ENCODE measurements at regions of chr1 and their contacts with region 1.

Region 1: DNA sequence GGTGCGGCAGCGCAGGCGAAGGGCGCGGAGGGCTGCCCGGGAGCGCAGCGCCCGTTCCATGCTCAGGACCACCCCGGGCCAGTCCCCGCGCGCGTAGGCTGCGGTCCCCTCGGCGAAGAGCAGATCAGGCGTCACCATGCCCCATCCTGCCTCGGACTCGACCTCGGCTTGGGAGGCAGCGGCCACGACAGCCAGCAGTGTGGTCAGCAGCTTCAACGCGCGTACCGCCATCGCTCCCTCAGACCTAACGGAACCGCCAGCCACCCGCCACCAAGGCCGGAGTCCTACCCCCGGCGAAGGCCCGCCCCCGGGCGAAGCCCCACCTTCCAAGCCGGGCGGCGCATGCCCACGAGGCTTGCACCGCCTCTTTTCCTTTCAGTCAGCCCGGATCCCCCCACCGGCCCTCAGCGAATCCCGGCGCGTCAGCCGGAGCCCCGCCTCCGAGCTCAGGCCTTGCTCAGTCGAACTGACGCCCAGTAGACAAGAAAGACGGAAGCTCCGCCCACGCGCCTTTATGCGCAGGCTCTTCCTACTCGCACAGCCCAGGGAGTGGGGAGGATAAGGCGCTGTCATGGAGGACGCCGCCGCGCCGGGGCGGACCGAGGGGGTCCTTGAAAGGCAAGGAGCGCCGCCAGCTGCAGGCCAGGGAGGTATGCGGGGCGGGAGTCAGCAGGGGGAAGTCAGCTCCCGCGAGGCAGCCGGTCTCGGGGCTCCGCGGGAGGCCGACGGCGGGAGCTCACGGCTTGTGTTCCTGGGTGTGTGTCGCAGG is at the starts of genes C1orf50 and P3H1:
- DNase-seq: peak; percentile 98
- ATAC-seq: peak; percentile 94
- H3K4me3 ChIP-seq: peak within 1 kb of the TSS; percentile 95 to 99 (median 97)
- H3K27ac ChIP-seq: peak within 1 kb of the TSS; percentile 77
- H3K4me1 ChIP-seq: peaks cover 56% of the 10 kb centered on the region
- H3K27me3 ChIP-seq: peaks cover 0 to 4% of the 10 kb centered on the region in 2 experiments; a peak in 1 of 5 replicates
- CTCF ChIP-seq: peak; percentile 35; the same call in 1 of the 2 replicates
- EP300 ChIP-seq: no peak; a peak in 1 of 4 replicates
- POLR2A ChIP-seq: peak; percentile 86 to 95
- RAD21 ChIP-seq: peak; percentile 48
- total RNA-seq, gene C1orf50: 4.8 and 5.3 TPM in 2 replicates
- total RNA-seq, gene P3H1: 18.7 and 64.6 TPM in 2 replicates

Region 2: DNA sequence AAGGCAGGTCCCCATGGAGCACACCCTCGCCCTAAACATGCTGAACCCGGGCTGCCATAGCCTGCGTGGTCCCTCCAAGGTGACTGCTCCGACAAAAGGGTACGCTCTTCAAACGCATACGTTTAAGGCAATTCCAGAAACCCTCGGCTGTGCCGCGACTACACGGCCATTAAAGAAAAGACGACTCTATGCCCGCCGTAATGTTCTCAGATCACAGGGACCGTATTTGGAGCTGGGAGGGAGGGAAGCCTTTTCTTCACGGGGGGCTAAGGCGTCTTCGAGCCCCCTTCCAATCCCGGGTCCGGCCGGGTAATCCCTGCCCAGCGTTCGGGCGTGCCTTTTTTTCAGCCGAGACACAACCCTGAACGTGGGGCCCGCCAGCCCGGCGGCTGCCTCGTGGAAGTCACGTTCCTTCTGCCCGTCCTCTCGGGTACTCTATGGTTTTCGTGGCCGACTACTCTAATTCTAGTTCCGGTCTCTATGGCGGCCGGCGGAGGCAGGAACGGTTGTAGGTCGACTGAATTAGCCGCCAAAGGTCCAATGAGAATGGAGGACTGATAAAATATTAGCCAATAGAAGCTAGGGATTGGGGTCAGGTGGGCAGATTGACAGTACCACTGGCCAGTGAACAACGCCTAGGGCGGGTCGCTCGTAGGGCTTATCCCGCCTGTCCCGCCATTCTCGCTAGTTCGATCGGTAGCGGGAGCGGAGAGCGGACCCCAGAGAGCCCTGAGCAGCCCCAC is 85.0 kb before region 1 on chr1 and contains the start of gene YBX1:
- CTCF ChIA-PET with region 1: no interaction called
- POLR2A ChIA-PET with region 1: interaction called, 33 read pairs
- in situ Hi-C with region 1: no loop called
- intact Hi-C with region 1: no loop called
- DNase-seq: peak; percentile 98
- ATAC-seq: peak; percentile 95
- H3K4me3 ChIP-seq: peak within 1 kb of the TSS; percentile 76 to 87 (median 86)
- H3K27ac ChIP-seq: peak within 1 kb of the TSS; percentile 95
- H3K4me1 ChIP-seq: peaks cover 46% of the 10 kb centered on the region
- H3K27me3 ChIP-seq: no peaks in the 10 kb centered on the region; a peak in 1 of 5 replicates
- CTCF ChIP-seq: no peak
- EP300 ChIP-seq: no peak
- POLR2A ChIP-seq: peak; percentile 79 to 89
- RAD21 ChIP-seq: no peak
- total RNA-seq, gene YBX1: 500 and 628 TPM in 2 replicates

Region 3: DNA sequence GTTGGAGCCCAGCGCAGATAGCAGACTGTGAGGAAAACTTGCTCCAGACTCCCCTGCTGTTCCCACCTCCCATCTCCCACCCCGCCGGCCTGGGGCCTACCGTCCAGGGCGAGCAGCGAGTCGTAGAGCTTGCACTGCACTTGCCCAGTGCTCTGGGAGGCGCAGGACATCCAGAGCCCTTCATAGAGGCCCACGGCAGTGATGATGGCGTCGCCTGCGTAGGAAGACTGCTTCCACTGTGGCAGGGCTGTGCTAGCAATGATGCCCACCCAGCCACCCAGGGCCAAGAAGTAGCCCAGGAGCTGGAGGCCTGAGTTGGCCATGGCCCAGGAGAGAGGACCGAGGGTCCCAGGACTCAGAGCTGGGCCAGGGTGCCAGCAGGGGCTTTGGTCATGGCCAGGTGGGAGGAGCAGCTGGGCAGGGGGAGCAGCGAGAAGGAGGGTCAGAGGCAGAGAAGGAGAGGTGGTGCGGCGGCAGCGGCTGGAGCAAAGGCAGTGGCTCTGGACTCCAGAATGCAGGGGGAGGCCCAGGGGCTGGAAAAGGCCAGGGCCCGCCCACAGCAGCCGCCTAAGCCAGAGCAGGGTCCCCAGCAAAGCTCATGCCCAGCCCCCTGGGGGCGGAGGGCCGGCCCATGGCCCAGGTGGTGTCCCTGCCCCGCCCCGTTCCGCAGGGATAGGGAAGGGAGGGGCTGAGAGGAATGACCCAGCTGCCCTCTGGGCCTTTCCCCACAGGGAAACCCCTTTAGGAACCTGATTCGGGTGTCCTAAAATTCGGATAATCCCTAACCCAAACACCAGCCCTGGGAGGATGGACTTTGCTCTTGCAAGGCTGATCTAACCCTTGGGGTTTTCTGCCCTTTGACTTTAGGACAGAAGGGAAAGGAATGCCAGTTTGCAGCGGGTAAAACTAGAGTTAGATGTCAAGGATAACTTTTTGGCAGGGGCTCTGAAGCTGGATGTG is 26.9 kb before region 1 on chr1 and contains the start of gene CLDN19:
- CTCF ChIA-PET with region 1: no interaction called
- POLR2A ChIA-PET with region 1: interaction called, 28 read pairs
- in situ Hi-C with region 1: no loop called
- intact Hi-C with region 1: no loop called
- DNase-seq: peak; percentile 73
- ATAC-seq: peak; percentile 79
- H3K4me3 ChIP-seq: peak within 1 kb of the TSS; percentile 64 to 83 (median 76)
- H3K27ac ChIP-seq: no peak within 1 kb of the TSS
- H3K4me1 ChIP-seq: peaks cover 73% of the 10 kb centered on the region
- H3K27me3 ChIP-seq: no peaks in the 10 kb centered on the region
- CTCF ChIP-seq: no peak
- EP300 ChIP-seq: peak in 1 of 2 experiments; percentile 29; a peak in 1 of 4 replicates
- POLR2A ChIP-seq: peak in 1 of 2 experiments; percentile 60; a peak in 1 of 4 replicates
- RAD21 ChIP-seq: no peak
- total RNA-seq, gene CLDN19: 4.3 and 7.6 TPM in 2 replicates

Region 4: DNA sequence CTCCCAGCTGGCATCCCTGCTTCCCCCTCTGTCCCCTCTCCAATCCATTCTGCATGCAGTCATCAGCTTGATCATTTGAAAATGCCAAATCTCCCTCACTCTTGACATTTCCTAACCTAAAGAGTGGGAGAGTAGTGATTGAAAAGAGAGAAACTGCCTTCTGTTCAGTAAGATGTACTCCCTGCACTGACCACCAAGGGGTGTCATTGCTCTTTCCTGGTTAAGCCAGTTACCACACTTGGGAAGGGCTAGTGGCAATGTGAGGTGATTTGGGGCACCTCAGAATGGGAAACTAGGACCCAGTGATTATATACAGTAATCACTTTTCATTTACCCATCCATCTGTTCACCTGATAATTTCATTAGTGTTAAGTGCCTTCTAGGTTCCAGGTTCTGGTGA is 10.9 kb after region 1 on chr1:
- CTCF ChIA-PET with region 1: no interaction called
- POLR2A ChIA-PET with region 1: interaction called, 12 read pairs
- in situ Hi-C with region 1: no loop called
- intact Hi-C with region 1: no loop called
- DNase-seq: peak; percentile 40
- ATAC-seq: peak; percentile 82
- H3K4me3 ChIP-seq: no peak overlapping the region
- H3K27ac ChIP-seq: no peak overlapping the region
- H3K4me1 ChIP-seq: peaks cover 12% of the 10 kb centered on the region; the same call in 1 of the 2 replicates
- H3K27me3 ChIP-seq: no peaks in the 10 kb centered on the region
- CTCF ChIP-seq: peak; percentile 81
- EP300 ChIP-seq: no peak
- POLR2A ChIP-seq: no peak
- RAD21 ChIP-seq: peak; percentile 77

Region 5: DNA sequence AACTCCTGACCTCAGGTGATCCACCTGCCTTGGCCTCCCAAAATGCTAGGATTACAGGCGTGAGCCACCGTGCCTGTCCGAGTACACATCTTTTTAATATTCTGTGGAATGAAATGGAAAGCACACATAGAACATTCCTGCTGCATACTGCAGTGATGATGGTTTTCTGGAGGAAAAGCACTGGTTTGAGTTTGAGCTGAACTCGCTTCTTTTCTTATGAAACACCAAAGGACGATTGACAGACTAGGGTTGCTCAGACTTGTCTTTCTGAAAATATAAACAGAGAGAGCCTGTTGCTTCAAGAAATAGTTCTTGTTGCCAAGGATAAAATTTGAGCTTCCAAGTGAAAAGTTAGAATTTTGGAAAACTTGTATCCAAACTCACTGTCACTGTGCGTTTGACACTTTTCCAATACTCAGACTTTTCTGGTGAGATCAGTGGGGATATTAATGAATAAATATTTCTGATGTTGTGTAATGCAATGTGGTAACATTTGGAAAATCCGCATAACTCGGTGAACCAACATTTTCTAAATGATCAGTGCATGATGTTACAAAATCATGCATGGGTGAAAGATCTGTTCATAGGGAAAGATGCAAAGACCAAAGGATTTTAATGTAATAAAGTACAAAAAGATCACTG is 35.0 kb after region 1 on chr1:
- CTCF ChIA-PET with region 1: no interaction called
- POLR2A ChIA-PET with region 1: no interaction called
- in situ Hi-C with region 1: no loop called
- intact Hi-C with region 1: no loop called
- DNase-seq: no peak
- ATAC-seq: no peak
- H3K4me3 ChIP-seq: no peak overlapping the region
- H3K27ac ChIP-seq: no peak overlapping the region
- H3K4me1 ChIP-seq: no peaks in the 10 kb centered on the region
- H3K27me3 ChIP-seq: no peaks in the 10 kb centered on the region
- CTCF ChIP-seq: no peak
- EP300 ChIP-seq: no peak
- POLR2A ChIP-seq: no peak
- RAD21 ChIP-seq: no peak

Region 6: DNA sequence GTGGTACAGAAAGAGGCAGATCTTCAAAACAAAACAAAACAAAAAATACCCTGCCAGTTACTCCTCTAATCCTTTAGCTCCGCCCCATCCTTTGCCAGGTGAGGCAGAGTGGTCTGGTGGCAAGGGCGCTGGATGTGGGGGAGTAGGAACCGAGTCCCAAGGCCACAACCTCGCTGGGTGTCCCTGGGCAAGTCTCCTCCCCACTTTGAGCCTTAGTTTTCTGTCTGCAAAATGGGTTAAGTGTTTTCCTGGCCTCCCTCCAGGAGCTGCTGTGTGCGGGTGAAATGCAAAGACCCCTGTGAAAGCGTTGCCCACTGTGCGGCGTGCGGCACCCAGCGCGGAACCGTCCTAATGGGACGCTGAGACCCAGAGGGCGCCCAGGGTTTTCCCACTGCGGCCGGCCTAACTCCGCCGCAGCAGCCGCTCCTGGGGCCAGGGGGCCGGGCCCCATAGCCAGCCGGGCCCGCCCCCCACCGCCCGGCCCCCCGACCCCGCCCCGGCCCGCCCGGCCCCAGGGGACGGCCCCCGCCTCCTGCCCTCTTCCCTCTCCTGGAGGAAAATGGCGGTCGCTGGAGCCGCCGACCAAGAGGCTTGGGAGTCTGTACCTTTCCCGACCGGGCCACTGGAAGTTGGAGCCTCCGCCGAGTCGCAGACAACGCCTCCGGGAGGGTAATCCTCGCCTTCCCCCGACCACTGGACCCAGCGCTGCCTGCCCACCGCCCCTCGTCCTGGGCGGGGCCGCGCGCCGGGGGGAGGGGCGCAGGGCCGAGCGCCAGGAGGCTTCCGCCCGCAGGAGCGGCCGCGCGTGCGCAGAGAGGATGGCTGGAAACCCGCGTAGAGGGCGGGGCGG is 49.9 kb after region 1 on chr1 and contains the starts of genes ERMAP and SVBP:
- CTCF ChIA-PET with region 1: no interaction called
- POLR2A ChIA-PET with region 1: interaction called, 25 read pairs
- in situ Hi-C with region 1: no loop called
- intact Hi-C with region 1: loop called (anchors 5 kb)
- DNase-seq: peak; percentile 73
- ATAC-seq: peak; percentile 94
- H3K4me3 ChIP-seq: peak within 1 kb of the TSS; percentile 73 to 87 (median 84)
- H3K27ac ChIP-seq: peak within 1 kb of the TSS; percentile 100
- H3K4me1 ChIP-seq: peaks cover 34% of the 10 kb centered on the region
- H3K27me3 ChIP-seq: no peaks in the 10 kb centered on the region; a peak in 1 of 5 replicates
- CTCF ChIP-seq: peak; percentile 43
- EP300 ChIP-seq: no peak
- POLR2A ChIP-seq: peak; percentile 74 to 86
- RAD21 ChIP-seq: peak; percentile 38; the same call in 1 of the 2 replicates
- total RNA-seq, gene ERMAP: 2.6 and 4.4 TPM in 2 replicates
- total RNA-seq, gene SVBP: 45.2 and 48.2 TPM in 2 replicates

Region 7: GRCh38 chr1:42846257-42847110 is 79.6 kb after region 1 on chr1 and contains the start of gene ZNF691:
- CTCF ChIA-PET with region 1: no interaction called
- POLR2A ChIA-PET with region 1: interaction called, 29 read pairs
- in situ Hi-C with region 1: no loop called
- intact Hi-C with region 1: loop called (anchors 2 kb)
- DNase-seq: peak; percentile 97
- ATAC-seq: peak; percentile 98
- H3K4me3 ChIP-seq: peak within 1 kb of the TSS; percentile 85 to 97 (median 95)
- H3K27ac ChIP-seq: peak within 1 kb of the TSS; percentile 85
- H3K4me1 ChIP-seq: peaks cover 24% of the 10 kb centered on the region
- H3K27me3 ChIP-seq: no peaks in the 10 kb centered on the region; a peak in 1 of 5 replicates
- CTCF ChIP-seq: peak; percentile 78
- EP300 ChIP-seq: no peak
- POLR2A ChIP-seq: peak; percentile 80 to 85
- RAD21 ChIP-seq: peak; percentile 33; the same call in 1 of the 2 replicates
- total RNA-seq, gene ZNF691: 7.8 and 8.2 TPM in 2 replicates

Region 8: GRCh38 chr1:42886800-42887199 is 119.9 kb after region 1 on chr1:
- CTCF ChIA-PET with region 1: no interaction called
- POLR2A ChIA-PET with region 1: no interaction called
- in situ Hi-C with region 1: no loop called
- intact Hi-C with region 1: no loop called
- DNase-seq: no peak
- ATAC-seq: no peak
- H3K4me3 ChIP-seq: no peak overlapping the region
- H3K27ac ChIP-seq: no peak overlapping the region
- H3K4me1 ChIP-seq: no peaks in the 10 kb centered on the region
- H3K27me3 ChIP-seq: peaks cover 5 to 14% of the 10 kb centered on the region in 2 experiments; a peak in 4 of 5 replicates
- CTCF ChIP-seq: no peak
- EP300 ChIP-seq: no peak
- POLR2A ChIP-seq: no peak
- RAD21 ChIP-seq: no peak

Region 9: GRCh38 chr1:42924082-42924850 is 157.3 kb after region 1 on chr1:
- CTCF ChIA-PET with region 1: no interaction called
- POLR2A ChIA-PET with region 1: no interaction called
- in situ Hi-C with region 1: no loop called
- intact Hi-C with region 1: no loop called
- DNase-seq: peak; percentile 86
- ATAC-seq: peak; percentile 93
- H3K4me3 ChIP-seq: peak overlapping the region; percentile 46 to 74 (median 55)
- H3K27ac ChIP-seq: no peak overlapping the region
- H3K4me1 ChIP-seq: peaks cover 53% of the 10 kb centered on the region
- H3K27me3 ChIP-seq: no peaks in the 10 kb centered on the region
- CTCF ChIP-seq: peak; percentile 58
- EP300 ChIP-seq: no peak
- POLR2A ChIP-seq: peak; percentile 21 to 81; a peak in 2 of 4 replicates
- RAD21 ChIP-seq: peak; percentile 42; the same call in 1 of the 2 replicates

Measured in HepG2 (cell line).